ENCODE measurements at regions of chr17 and their contacts with region 1.

Region 1: GRCh38 chr17:69567130-69567529 is 152.6 kb downstream of the MAP2K6 start:
- DNase-seq: peak; percentile 28
- ATAC-seq: no peak
- H3K4me3 ChIP-seq: no peak overlapping the region
- H3K27ac ChIP-seq: no peak overlapping the region
- H3K4me1 ChIP-seq: peaks cover 3% of the 10 kb centered on the region
- H3K27me3 ChIP-seq: no peaks in the 10 kb centered on the region
- CTCF ChIP-seq: no peak

Region 2: GRCh38 chr17:69581061-69581961 is 14.2 kb after region 1 on chr17:
- CTCF ChIA-PET with region 1: no interaction called
- POLR2A ChIA-PET with region 1: no interaction called
- intact Hi-C with region 1: no loop called
- DNase-seq: no peak
- ATAC-seq: no peak
- H3K4me3 ChIP-seq: no peak overlapping the region
- H3K27ac ChIP-seq: no peak overlapping the region
- H3K4me1 ChIP-seq: no peaks in the 10 kb centered on the region
- H3K27me3 ChIP-seq: no peaks in the 10 kb centered on the region
- CTCF ChIP-seq: no peak

Region 3: GRCh38 chr17:70100983-70101382 is 533.9 kb after region 1 on chr17:
- CTCF ChIA-PET with region 1: no interaction called
- POLR2A ChIA-PET with region 1: no interaction called
- intact Hi-C with region 1: loop called (anchors 5 kb)
- DNase-seq: peak; percentile 29
- ATAC-seq: peak; percentile 48; the same call in 1 of the 2 replicates
- H3K4me3 ChIP-seq: no peak overlapping the region
- H3K27ac ChIP-seq: no peak overlapping the region
- H3K4me1 ChIP-seq: no peaks in the 10 kb centered on the region
- H3K27me3 ChIP-seq: no peaks in the 10 kb centered on the region
- CTCF ChIP-seq: peak; percentile 37; the same call in 1 of the 2 replicates

Region 4: GRCh38 chr17:70552230-70552981 is 985.3 kb after region 1 on chr17:
- CTCF ChIA-PET with region 1: no interaction called
- POLR2A ChIA-PET with region 1: no interaction called
- intact Hi-C with region 1: loop called (anchors 5 kb)
- DNase-seq: peak; percentile 80
- ATAC-seq: peak; percentile 78
- H3K4me3 ChIP-seq: no peak overlapping the region
- H3K27ac ChIP-seq: no peak overlapping the region
- H3K4me1 ChIP-seq: no peaks in the 10 kb centered on the region
- H3K27me3 ChIP-seq: no peaks in the 10 kb centered on the region
- CTCF ChIP-seq: peak; percentile 81

Measured in PC-3 (cell line).